T-cell (primary cell): ENCODE measurements at regions of chrX and their contacts with region 1.

Region 1: GRCh38 chrX:120358737-120359456 is 3.0 kb upstream of the ATP1B4 start:
- DNase-seq: no peak
- ATAC-seq: no peak
- H3K4me3 ChIP-seq: no peak overlapping the region
- H3K4me3 Mint-ChIP-seq: no peak overlapping the region
- H3K27ac ChIP-seq: no peak overlapping the region
- H3K27ac Mint-ChIP-seq: no peak overlapping the region
- H3K4me1 ChIP-seq: no peaks in the 10 kb centered on the region
- H3K4me1 Mint-ChIP-seq: no peaks in the 10 kb centered on the region
- H3K27me3 ChIP-seq: peaks cover 0 to 10% of the 10 kb centered on the region in 2 experiments
- H3K27me3 Mint-ChIP-seq: peaks cover 3 to 24% of the 10 kb centered on the region in 2 donors

Region 2: GRCh38 chrX:120115438-120115963 is 243.4 kb before region 1 on chrX and contains the start of gene RHOXF1:
- CTCF ChIA-PET with region 1: no interaction called
- POLR2A ChIA-PET with region 1: interaction called in 1 of 2 experiments, 14 read pairs
- DNase-seq: no peak
- ATAC-seq: no peak
- H3K4me3 ChIP-seq: no peak within 1 kb of the TSS
- H3K4me3 Mint-ChIP-seq: no peak within 1 kb of the TSS
- H3K27ac ChIP-seq: no peak within 1 kb of the TSS
- H3K27ac Mint-ChIP-seq: no peak within 1 kb of the TSS
- H3K4me1 ChIP-seq: no peaks in the 10 kb centered on the region
- H3K4me1 Mint-ChIP-seq: no peaks in the 10 kb centered on the region
- H3K27me3 ChIP-seq: no peaks in the 10 kb centered on the region
- H3K27me3 Mint-ChIP-seq: peaks cover 0 to 9% of the 10 kb centered on the region in 2 donors
- total RNA-seq, gene RHOXF1: 0.60 to 1.5 (median 0.85) TPM